Ascending aorta (tissue), 2 donors: ENCODE measurements at regions of chr18 and their contacts with region 1.

Region 1: DNA sequence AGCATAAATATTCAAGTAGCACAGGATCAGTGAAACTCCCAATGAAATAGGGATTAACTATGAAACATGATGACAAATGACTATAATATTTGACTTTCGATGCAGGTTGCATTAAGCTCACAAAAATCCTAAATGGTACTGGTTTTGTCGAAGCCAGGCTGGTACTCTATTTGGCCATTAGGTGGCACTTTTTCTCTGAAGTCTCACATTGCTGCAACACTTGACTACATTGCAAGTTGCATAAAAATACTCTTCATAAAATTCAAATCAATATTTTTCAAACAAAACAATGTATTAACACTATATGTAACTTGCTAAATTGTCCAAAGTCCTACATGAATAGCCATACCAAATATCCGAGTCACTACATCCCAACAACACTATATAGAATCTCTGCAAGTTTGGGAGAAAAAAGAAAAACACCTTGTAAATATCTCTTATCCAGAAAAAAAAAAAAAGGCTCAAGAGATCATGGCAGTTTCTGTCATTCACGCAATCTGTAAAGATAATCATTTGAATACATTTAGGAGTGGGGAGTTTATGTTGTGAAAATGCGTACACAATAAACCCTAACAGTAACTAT is 9.5 kb downstream of the RTTN start:
- DNase-seq: no peak
- H3K4me3 ChIP-seq: no peak overlapping the region
- H3K27ac ChIP-seq: no peak overlapping the region
- H3K4me1 ChIP-seq: no peaks in the 10 kb centered on the region
- H3K27me3 ChIP-seq: no peaks in the 10 kb centered on the region
- CTCF ChIP-seq: peak; percentile 45 to 70 (median 62)

Region 2: GRCh38 chr18:70431203-70431624 is 235.3 kb after region 1 on chr18:
- intact Hi-C with region 1: loop called (anchors 1 kb)
- DNase-seq: peak in 1 of 2 donors; percentile 5
- H3K4me3 ChIP-seq: no peak overlapping the region
- H3K27ac ChIP-seq: no peak overlapping the region
- H3K4me1 ChIP-seq: no peaks in the 10 kb centered on the region
- H3K27me3 ChIP-seq: no peaks in the 10 kb centered on the region
- CTCF ChIP-seq: no peak

Region 3: DNA sequence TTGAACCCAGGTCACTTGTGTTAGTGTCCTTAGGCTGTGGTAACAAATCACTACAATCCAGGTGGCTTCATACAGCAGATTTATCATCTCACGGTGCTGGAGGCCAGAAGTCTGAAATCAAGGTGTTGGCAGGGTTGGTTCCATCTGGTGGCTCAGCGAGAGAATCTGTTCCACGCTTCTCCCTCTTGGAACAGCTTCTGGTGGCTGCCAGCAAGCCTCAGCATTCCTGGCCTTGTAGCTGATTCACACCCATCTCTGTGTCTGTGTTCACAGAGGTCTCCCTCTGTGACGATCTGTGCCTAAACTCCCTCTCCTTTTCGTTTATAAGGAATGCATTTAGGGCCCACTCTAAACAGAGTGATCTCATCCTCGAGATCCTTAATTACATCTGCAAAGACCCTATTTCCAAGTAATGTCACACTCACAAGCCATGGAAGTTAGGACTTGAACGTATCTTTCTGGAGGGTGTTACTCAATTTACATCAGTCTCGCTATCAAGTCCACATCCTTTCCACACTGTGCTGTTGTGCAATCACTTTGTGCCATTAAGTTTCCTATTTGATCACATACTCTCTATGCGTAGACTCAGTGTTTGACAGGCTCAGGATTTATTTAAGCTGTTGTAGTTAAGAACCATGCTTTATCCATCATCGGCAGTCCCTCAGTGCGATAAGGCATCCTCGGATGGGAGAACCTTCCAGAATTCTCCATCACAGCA is 257.3 kb after region 1 on chr18:
- intact Hi-C with region 1: loop called (anchors 2 kb)
- DNase-seq: no peak
- H3K4me3 ChIP-seq: no peak overlapping the region
- H3K27ac ChIP-seq: no peak overlapping the region
- H3K4me1 ChIP-seq: no peaks in the 10 kb centered on the region
- H3K27me3 ChIP-seq: no peaks in the 10 kb centered on the region
- CTCF ChIP-seq: no peak